Activated CD4-positive, alpha-beta T cell treated with anti-CD3 and anti-CD28 coated beads for 36 hours (primary cell): ENCODE measurements at regions of chr12 and their contacts with region 1.

Region 1: DNA sequence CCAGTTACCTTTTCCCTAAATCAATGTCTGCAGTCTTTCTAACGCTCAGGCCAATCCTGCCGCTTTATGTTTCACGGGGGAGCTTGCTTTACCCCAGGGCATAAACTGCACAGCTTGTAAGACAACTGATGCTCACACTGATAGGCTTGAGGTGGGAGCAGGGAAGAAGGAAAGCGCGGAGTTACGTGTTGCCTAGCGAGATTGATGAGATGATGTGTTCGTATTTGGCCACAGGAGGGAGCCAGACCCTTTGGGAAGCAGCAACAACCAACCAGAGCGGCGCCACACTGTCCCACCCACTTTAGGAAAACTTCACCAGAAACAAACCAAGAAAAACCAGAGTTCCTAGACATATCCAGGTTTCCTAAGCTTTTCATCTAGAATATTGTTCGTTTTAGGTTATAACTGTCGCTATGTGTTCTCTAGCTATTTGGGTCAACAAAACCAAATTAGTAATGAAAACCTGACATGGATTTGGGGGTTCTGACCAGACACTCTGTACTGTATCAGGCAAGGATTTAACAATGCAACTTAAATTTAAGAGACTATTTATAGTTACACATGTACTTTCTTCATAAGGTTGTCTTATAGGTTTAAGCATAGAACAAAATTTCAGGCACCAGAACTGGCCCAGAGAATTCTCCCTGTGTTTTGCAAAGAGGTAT is 2.4 kb downstream of the IL26 start:
- DNase-seq: peak; percentile 85
- ATAC-seq: peak; percentile 95
- H3K4me3 Mint-ChIP-seq: no peak overlapping the region
- H3K27ac Mint-ChIP-seq: no peak overlapping the region
- H3K4me1 Mint-ChIP-seq: peaks cover 10% of the 10 kb centered on the region
- H3K27me3 Mint-ChIP-seq: peaks cover 13% of the 10 kb centered on the region

Region 2: DNA sequence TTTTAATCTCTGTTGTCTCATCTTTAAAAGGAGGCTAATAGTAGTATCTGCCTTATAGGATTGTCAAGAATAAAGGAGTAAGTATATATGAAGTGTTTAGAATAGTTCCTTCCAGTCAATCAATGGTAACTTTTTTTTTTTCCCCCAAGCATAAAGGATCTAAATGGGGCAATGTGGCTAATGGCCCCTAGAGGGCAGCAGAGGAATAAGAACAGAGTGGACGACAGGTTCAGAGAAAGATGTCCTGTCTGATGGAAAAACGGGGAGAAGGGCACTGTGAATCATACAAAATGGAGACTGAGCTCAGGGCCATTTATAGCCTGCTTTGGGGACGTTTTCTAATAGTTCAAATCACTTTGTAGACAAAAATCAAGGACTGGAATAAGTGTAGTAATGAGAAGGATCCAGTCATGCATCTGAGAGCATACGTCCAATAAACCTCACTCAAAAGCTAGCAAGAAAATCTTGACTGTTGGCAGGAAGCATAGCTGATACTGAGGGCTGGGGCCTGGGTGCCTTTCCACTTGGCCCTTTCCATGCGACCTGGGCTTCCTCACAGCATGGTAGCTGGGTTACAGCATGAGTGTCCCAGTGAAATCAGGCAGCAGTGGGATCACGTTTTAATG is 182.7 kb before region 1 on chr12:
- CTCF ChIA-PET with region 1: interaction called, 26 read pairs
- POLR2A ChIA-PET with region 1: no interaction called
- intact Hi-C with region 1: loop called (anchors 1 to 2 kb)
- DNase-seq: peak; percentile 76
- ATAC-seq: peak; percentile 69
- H3K4me3 Mint-ChIP-seq: no peak overlapping the region
- H3K27ac Mint-ChIP-seq: no peak overlapping the region
- H3K4me1 Mint-ChIP-seq: peaks cover 34% of the 10 kb centered on the region
- H3K27me3 Mint-ChIP-seq: no peaks in the 10 kb centered on the region

Region 3: GRCh38 chr12:68240597-68241374 is 17.6 kb after region 1 on chr12:
- CTCF ChIA-PET with region 1: interaction called, 11 read pairs
- POLR2A ChIA-PET with region 1: no interaction called
- intact Hi-C with region 1: no loop called
- DNase-seq: peak; percentile 73
- ATAC-seq: peak; percentile 97
- H3K4me3 Mint-ChIP-seq: peak overlapping the region; percentile 4
- H3K27ac Mint-ChIP-seq: peak overlapping the region; percentile 27
- H3K4me1 Mint-ChIP-seq: peaks cover 48% of the 10 kb centered on the region
- H3K27me3 Mint-ChIP-seq: peaks cover 2% of the 10 kb centered on the region

Region 4: DNA sequence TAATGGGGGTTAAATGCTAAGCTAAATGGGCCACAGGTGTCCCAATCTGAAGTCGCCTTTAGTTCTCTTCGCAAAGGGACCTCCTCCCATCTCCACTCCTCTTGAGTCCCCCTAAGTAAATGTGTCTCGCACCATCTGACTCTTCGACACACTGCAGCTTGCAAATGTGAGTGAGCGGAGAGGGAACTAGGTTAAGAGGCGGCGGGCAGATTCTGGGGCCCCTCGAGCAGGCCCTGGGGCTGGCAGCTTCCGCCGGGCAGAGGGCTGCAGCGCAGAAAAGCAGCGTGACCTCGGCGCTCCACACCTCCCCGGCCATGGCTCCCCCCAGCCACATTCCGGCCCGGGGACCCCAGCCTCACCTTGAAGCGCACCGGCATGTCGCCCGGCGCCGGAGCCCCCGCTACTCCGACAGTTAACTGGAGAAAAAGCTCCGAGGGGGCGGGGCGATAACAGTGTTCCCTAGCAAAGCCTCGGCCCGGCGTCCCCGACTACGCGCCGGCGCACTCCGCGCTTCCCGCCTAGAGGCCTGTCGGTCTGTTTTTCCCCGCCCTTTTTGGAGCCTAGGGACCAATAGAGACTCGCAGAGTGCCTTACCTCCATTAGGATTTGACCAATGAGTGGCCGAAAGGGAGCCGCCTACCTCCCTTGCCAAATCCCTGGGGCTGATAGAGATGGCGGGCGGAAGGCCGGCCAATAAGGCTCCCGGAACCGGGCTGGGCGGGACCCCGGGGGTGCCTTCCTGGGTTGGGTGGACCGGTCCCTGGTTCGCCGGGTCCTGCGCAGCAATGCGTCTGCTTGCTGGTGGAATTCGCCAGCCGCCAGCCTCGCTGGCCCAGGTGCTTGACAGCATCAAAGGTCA is 108.9 kb after region 1 on chr12 and contains the start of gene MDM1:
- CTCF ChIA-PET with region 1: interaction called, 17 read pairs
- POLR2A ChIA-PET with region 1: no interaction called
- intact Hi-C with region 1: no loop called
- DNase-seq: peak; percentile 97
- ATAC-seq: peak; percentile 98
- H3K4me3 Mint-ChIP-seq: peak within 1 kb of the TSS; percentile 80
- H3K27ac Mint-ChIP-seq: peak within 1 kb of the TSS; percentile 55
- H3K4me1 Mint-ChIP-seq: peaks cover 42% of the 10 kb centered on the region
- H3K27me3 Mint-ChIP-seq: peaks cover 2% of the 10 kb centered on the region
- total RNA-seq, gene MDM1: 12.7 to 13.6 TPM